ENCODE measurements at regions of chr7 and their contacts with region 1.

Region 1: DNA sequence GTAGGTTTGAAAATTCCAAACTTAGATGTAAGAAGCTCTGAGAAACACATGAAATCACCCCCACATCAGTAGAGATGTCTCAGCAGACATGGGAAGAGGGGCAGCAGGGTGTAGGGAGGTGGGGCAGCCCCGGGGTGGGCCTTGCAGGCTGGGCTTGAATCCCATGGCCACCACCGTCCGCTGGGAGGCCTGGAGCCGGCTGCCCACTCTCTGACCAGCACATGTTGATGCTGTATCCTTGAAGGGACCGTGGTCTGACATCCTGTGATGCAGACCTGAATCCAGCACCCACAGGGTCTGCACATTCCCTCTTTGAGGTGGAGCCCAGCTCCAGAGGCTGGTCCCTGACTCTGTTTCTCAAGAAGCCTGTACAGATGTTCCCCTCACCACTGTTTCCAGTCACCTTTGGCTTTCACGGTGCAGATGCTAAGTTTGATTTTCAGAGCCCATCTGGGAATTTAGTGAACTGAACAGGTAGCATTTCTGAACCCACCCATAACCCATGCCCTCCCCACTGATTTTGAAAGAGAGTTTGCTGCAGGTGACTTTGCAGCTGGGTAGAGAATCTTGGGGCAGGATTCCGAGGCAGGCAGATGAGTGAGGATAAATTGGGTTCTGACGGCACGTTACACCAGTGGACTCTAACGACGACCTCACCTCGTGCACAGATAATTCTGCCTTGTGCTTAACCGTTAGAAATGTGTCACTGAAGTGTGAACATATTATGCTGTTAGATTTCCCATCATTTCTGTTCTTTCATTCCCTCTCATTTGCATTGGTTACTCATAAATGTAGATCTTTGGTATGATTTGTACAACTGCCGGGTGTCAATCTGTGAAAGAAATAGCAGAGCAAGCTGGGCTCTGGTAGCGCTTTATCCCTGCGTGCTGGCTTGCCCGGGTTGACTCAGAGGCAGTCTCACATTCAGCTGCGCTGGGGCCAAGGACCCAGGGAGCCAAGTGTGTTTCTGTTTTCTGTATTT is 45.7 kb downstream of the IKZF1 start:
- DNase-seq: peak; percentile 87
- H3K4me3 Mint-ChIP-seq: peak overlapping the region; percentile 62
- H3K27ac Mint-ChIP-seq: peak overlapping the region; percentile 92
- H3K4me1 Mint-ChIP-seq: peaks cover 97% of the 10 kb centered on the region
- H3K27me3 Mint-ChIP-seq: no peaks in the 10 kb centered on the region

Region 2: GRCh38 chr7:50304158-50304910 is 45.9 kb before region 1 on chr7 and contains the start of gene IKZF1:
- CTCF ChIA-PET with region 1: interaction called, 28 read pairs
- POLR2A ChIA-PET with region 1: interaction called, 1,125 read pairs
- DNase-seq: peak; percentile 58
- H3K4me3 Mint-ChIP-seq: peak within 1 kb of the TSS; percentile 88
- H3K27ac Mint-ChIP-seq: peak within 1 kb of the TSS; percentile 99
- H3K4me1 Mint-ChIP-seq: peaks cover 29% of the 10 kb centered on the region
- H3K27me3 Mint-ChIP-seq: peaks cover 8% of the 10 kb centered on the region
- total RNA-seq, gene IKZF1: 383 to 404 TPM

Region 3: GRCh38 chr7:50449881-50450589 is 99.8 kb after region 1 on chr7 and contains the start of gene FIGNL1:
- CTCF ChIA-PET with region 1: no interaction called
- POLR2A ChIA-PET with region 1: interaction called, 13 read pairs
- DNase-seq: peak; percentile 87
- H3K4me3 Mint-ChIP-seq: peak within 1 kb of the TSS; percentile 91
- H3K27ac Mint-ChIP-seq: peak within 1 kb of the TSS; percentile 61
- H3K4me1 Mint-ChIP-seq: peaks cover 46% of the 10 kb centered on the region
- H3K27me3 Mint-ChIP-seq: peaks cover 7% of the 10 kb centered on the region
- total RNA-seq, gene FIGNL1: 39.7 to 41.2 TPM

Region 4: DNA sequence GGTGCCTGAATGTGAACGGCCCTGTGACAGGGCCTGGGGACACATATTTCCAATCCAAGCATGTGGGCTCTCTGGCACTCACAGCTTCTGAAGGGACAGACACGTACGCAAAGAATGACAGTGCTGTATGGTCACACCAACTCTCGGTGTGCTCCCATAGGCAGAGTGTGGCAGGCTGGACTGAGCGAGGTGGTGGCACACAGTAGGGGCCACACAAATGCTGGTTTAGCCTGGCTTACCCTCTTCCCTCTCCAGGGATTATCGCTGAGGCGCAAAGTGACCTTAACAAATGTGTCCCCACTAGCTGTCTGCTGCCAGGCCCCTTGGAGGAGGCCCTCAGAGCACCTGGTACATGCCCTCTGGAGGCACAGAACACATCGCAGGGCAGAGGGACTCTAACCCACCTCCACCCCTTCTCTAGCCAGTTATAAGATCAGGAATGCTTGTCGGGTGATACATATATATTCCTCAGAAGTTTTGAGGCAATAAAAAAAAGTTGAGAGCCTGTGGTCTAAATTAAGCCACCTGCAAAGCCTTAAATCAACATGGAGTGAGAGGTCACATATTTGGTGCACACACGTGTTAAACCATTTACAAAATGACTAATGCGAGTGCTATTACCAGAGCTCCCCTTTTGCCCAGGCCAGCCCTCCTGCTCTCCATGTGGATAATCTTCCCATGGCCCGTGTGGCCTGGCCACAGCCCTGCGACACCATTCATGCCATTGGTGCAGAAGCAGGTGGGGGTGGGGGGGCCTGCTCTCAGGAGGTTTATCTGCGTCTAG is 695.3 kb after region 1 on chr7:
- CTCF ChIA-PET with region 1: no interaction called
- POLR2A ChIA-PET with region 1: no interaction called
- DNase-seq: no peak
- H3K4me3 Mint-ChIP-seq: no peak overlapping the region
- H3K27ac Mint-ChIP-seq: no peak overlapping the region
- H3K4me1 Mint-ChIP-seq: no peaks in the 10 kb centered on the region
- H3K27me3 Mint-ChIP-seq: peaks cover 10% of the 10 kb centered on the region